Naive thymus-derived CD4-positive, alpha-beta T cell (primary cell): ENCODE measurements at regions of chr5 and their contacts with region 1.

Region 1: DNA sequence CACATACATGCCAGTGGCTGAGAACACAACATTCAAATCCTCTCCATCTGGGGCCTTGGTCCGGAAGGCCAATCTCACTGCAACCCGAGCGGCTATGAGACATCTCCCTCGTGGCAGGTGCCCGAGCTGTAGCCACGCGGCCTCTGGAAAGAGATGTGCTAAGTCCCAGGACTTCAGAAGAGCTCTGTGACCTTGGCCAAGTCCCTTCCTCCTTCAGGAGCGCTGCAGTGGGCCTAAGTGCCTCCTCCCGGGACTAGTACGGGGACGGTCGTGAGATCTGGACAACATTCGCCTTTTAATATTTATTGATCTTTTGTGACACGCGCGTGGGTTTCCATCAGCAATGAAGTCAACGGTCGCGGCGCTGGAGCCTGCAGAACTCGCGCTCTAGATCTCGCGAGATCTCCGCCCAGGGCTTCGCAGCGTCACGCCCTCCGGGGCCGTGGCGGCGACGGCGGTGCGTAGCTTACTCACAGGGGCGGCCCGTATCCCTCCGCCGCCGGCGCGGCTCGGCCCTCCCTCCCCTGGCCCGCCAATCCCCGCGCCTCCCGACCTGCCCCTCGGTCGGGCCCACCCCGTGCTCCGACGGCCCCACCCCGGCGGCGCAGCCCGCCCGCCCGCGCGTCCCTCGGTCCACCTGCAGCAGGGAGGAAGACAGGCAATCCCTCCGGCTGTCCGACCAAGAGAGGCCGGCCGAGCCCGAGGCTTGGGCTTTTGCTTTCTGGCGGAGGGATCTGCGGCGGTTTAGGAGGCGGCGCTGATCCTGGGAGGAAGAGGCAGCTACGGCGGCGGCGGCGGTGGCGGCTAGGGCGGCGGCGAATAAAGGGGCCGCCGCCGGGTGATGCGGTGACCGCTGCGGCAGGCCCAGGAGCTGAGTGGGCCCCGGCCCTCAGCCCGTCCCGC is at the start of gene UBE2D2:
- DNase-seq: peak; percentile 95 to 98 (median 97)
- ATAC-seq: peak; percentile 94
- H3K4me3 ChIP-seq: peak within 1 kb of the TSS; percentile 85
- H3K4me3 Mint-ChIP-seq: peak within 1 kb of the TSS; percentile 90 to 100 (median 98)
- H3K27ac ChIP-seq: peak within 1 kb of the TSS; percentile 92
- H3K27ac Mint-ChIP-seq: peak within 1 kb of the TSS; percentile 88 to 98 (median 95)
- H3K4me1 ChIP-seq: peaks cover 26 to 36% of the 10 kb centered on the region in 2 donors
- H3K4me1 Mint-ChIP-seq: peaks cover 28 to 39% (median 34%) of the 10 kb centered on the region in 7 donors
- H3K27me3 ChIP-seq: no peaks in the 10 kb centered on the region
- H3K27me3 Mint-ChIP-seq: no peaks in the 10 kb centered on the region
- total RNA-seq, gene UBE2D2: 145 to 214 (median 184) TPM

Region 2: GRCh38 chr5:138178516-138179276 is 1382.3 kb before region 1 on chr5 and contains the starts of genes BRD8 and KIF20A:
- CTCF ChIA-PET with region 1: no interaction called
- POLR2A ChIA-PET with region 1: no interaction called
- intact Hi-C with region 1: loop called in 1 of 2 experiments (anchors 2 kb)
- DNase-seq: peak; percentile 62 to 89 (median 84)
- ATAC-seq: peak; percentile 92
- H3K4me3 ChIP-seq: peak within 1 kb of the TSS; percentile 85
- H3K4me3 Mint-ChIP-seq: peak within 1 kb of the TSS in 2 of 10 donors; percentile 23 to 51
- H3K27ac ChIP-seq: peak within 1 kb of the TSS; percentile 74
- H3K27ac Mint-ChIP-seq: peak within 1 kb of the TSS in 2 of 9 donors; percentile 38 to 60
- H3K4me1 ChIP-seq: peaks cover 10 to 15% of the 10 kb centered on the region in 2 donors
- H3K4me1 Mint-ChIP-seq: peaks cover 0 to 45% (median 17%) of the 10 kb centered on the region in 7 donors
- H3K27me3 ChIP-seq: no peaks in the 10 kb centered on the region
- H3K27me3 Mint-ChIP-seq: no peaks in the 10 kb centered on the region
- total RNA-seq, gene BRD8: 24.7 to 81.9 (median 66.1) TPM
- total RNA-seq, gene KIF20A: 0.29 to 34.1 TPM in 2 of 5 experiments, not detected in the others

Region 3: DNA sequence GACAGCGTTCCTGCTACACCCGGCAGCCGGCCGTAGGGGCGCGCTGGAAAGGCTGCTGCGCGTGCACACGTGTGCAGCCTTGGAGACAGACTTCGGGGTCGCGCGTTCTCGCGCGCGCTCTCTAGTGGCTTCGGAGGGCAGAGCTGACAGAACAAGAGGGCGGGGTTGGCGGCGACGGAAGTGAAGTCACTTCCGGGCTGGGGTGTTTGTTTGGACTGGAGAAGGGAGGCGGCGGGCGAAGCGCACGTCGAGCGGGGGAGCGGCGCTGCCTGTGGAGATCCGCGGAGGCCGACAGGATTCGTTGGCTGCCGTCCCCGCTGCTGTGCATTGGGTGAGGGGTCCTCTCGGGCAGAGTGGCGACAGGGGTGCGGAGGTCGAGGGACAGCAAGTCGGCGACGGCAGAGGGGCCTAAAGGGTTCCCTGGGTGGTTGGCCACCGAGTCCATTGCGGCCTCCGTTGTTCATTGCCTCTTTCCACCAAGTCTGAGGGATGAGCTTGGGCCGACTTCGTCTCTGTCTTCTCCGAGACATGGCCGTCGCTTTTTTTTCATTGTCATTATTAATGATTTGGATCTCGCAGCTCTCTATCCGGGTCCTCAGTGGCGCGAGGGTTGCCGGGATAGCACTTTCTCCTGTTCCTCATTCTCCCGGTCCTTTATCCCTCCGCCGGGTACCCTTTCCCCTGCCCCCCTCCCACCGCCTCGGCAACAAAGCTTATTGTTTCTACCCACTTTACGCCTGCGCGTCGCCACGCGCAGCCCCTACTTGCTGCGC is 219.2 kb before region 1 on chr5 and contains the start of gene PAIP2:
- CTCF ChIA-PET with region 1: interaction called, 3 read pairs
- POLR2A ChIA-PET with region 1: interaction called, 7 read pairs
- intact Hi-C with region 1: loop called (anchors 1 to 2 kb)
- DNase-seq: peak; percentile 94 to 98 (median 97)
- ATAC-seq: peak; percentile 95
- H3K4me3 ChIP-seq: peak within 1 kb of the TSS; percentile 96
- H3K4me3 Mint-ChIP-seq: peak within 1 kb of the TSS; percentile 95 to 100 (median 98)
- H3K27ac ChIP-seq: peak within 1 kb of the TSS; percentile 98
- H3K27ac Mint-ChIP-seq: peak within 1 kb of the TSS; percentile 96 to 100 (median 99)
- H3K4me1 ChIP-seq: peaks cover 28 to 30% of the 10 kb centered on the region in 2 donors
- H3K4me1 Mint-ChIP-seq: peaks cover 34 to 65% (median 55%) of the 10 kb centered on the region in 7 donors
- H3K27me3 ChIP-seq: no peaks in the 10 kb centered on the region
- H3K27me3 Mint-ChIP-seq: peaks cover 0 to 5% (median 0%) of the 10 kb centered on the region in 5 donors
- total RNA-seq, gene PAIP2: 88.8 to 121 (median 106) TPM

Region 4: GRCh38 chr5:139439013-139439903 is 121.7 kb before region 1 on chr5 and contains the start of gene DNAJC18:
- CTCF ChIA-PET with region 1: no interaction called
- POLR2A ChIA-PET with region 1: interaction called, 7 read pairs
- intact Hi-C with region 1: loop called (anchors 1 kb)
- DNase-seq: peak; percentile 71 to 90 (median 85)
- ATAC-seq: peak; percentile 96
- H3K4me3 ChIP-seq: peak within 1 kb of the TSS; percentile 86
- H3K4me3 Mint-ChIP-seq: peak within 1 kb of the TSS; percentile 84 to 99 (median 98)
- H3K27ac ChIP-seq: peak within 1 kb of the TSS; percentile 100
- H3K27ac Mint-ChIP-seq: peak within 1 kb of the TSS; percentile 96 to 100 (median 99)
- H3K4me1 ChIP-seq: peaks cover 15 to 26% of the 10 kb centered on the region in 2 donors
- H3K4me1 Mint-ChIP-seq: peaks cover 23 to 64% (median 45%) of the 10 kb centered on the region in 7 donors
- H3K27me3 ChIP-seq: no peaks in the 10 kb centered on the region
- H3K27me3 Mint-ChIP-seq: no peaks in the 10 kb centered on the region
- total RNA-seq, gene DNAJC18: 2.2 to 9.7 (median 4.9) TPM

Region 5: DNA sequence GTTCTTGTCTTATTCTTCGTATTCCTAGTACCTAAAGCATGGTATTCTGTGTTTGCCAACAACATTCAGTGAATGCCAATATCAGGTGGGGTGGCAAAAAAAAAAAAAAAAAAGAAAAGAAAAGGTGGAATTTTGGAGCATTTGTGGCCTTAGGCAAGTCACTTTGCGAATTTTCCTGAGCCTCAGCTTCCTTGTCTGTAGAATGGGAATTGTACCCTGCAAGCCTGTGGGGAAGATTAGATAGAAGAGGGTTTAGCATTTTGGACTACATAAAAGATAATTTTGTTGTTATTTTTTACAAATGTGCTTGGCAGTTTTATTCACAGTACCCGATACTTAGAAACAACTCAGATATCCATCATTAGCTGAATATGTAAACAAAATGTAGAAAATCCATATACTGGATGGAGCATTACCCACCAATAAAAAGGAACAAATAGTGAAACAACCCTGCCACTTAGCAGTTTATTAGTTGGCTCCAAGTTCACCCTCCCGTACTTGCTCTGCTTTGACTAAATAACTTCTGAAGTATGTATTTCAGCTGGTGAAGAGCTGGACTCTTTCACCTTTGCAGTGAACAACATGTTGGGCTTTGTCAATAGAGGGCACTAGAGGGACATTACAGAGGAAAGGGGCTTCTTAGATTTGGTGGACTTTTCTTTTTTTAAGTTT is 13.8 kb after region 1 on chr5:
- CTCF ChIA-PET with region 1: interaction called, 29 read pairs
- POLR2A ChIA-PET with region 1: interaction called, 120 read pairs
- intact Hi-C with region 1: loop called (anchors 1 kb)
- DNase-seq: peak in 7 of 9 donors; percentile 27 to 60 (median 47)
- ATAC-seq: peak; percentile 75
- H3K4me3 ChIP-seq: no peak overlapping the region
- H3K4me3 Mint-ChIP-seq: peak overlapping the region in 9 of 10 donors; percentile 11 to 80 (median 53)
- H3K27ac ChIP-seq: peak overlapping the region; percentile 57
- H3K27ac Mint-ChIP-seq: peak overlapping the region; percentile 62 to 96 (median 90)
- H3K4me1 ChIP-seq: peaks cover 61 to 68% of the 10 kb centered on the region in 2 donors
- H3K4me1 Mint-ChIP-seq: peaks cover 56 to 88% (median 74%) of the 10 kb centered on the region in 7 donors
- H3K27me3 ChIP-seq: no peaks in the 10 kb centered on the region
- H3K27me3 Mint-ChIP-seq: no peaks in the 10 kb centered on the region

Region 6: DNA sequence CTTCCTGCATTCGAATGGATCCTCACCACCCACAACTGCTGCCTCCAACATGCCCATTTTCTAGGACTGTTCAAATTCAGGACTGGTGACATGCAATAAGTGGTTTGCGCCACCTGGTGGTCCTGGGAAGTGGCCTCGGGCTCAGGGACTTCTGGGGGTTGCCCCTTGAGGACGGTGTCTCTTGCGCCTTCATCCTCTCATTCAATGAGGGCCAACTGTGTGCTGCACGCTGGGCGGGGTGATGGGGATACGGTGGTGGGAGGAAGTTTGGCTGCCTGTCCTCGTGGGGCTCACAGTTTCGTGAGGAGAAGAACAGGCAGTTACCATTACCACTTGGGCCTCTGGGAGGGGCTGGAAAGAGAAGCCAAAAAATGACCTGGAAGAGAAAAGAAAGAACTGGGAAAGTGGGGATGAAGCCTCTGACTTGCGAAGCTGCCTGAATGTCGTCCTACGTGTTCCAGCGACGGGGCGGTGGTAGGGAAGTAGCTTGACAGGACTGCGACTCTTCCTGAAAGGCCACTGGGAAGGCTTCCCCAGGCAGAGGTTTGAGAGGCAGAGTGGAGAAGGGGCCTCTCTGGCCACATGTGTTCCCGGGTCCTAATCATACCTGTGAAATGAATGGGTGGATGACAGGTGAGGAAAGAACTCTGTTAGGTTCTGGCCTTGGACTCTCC is 283.6 kb after region 1 on chr5:
- CTCF ChIA-PET with region 1: no interaction called
- POLR2A ChIA-PET with region 1: no interaction called
- intact Hi-C with region 1: loop called in 1 of 2 experiments (anchors 1 kb)
- DNase-seq: peak; percentile 26 to 62 (median 57)
- ATAC-seq: peak; percentile 28
- H3K4me3 ChIP-seq: no peak overlapping the region
- H3K4me3 Mint-ChIP-seq: peak overlapping the region in 2 of 10 donors; percentile 21 to 49
- H3K27ac ChIP-seq: no peak overlapping the region
- H3K27ac Mint-ChIP-seq: no peak overlapping the region
- H3K4me1 ChIP-seq: peaks cover 0 to 5% of the 10 kb centered on the region in 2 donors
- H3K4me1 Mint-ChIP-seq: peaks cover 7 to 17% (median 12%) of the 10 kb centered on the region in 7 donors
- H3K27me3 ChIP-seq: no peaks in the 10 kb centered on the region
- H3K27me3 Mint-ChIP-seq: peaks cover 13 to 59% (median 16%) of the 10 kb centered on the region in 5 donors